ENCODE measurements at regions of chr3 and their contacts with region 1.

Region 1: DNA sequence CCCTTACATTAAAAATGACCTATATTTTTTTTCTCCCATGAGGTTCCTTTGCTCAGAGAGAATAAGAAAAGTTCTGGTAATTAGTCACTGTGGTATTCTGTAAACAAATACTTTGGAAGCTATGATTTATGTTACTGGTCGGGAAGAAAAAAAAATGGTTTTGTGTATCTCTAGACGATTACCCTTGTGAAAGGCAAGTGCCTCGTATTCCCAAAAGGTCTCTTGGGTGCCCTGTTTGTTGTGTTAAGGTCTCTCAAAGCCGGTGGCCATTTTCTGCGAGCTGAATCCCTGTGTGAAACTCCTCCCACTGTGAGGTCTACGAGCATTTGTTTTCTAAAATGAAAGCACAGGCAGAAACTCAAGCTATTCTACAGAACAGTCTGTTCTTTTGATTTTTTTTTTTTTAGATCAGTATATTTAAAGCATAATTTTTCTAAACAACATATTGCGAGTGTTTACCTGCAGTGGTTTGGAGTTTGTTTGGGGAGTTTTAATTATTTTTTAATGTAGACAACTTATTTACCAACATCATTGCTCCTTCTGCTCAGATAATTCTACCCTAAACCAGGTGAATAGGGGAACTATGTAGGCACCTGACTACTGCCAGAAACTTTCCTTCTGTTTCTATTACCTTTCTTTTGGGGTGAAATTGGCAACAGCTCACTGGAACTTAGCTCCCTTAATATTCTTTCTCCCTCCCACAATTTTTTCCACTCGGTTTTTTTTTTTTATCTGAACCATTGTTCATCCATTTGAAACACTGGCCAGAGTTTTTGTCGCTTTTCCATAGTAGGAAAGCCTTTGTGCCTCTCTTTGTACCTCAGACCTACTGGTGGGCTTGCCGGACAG is 44.0 kb downstream of the ZBTB38 start:
- DNase-seq: peak; percentile 73
- H3K4me3 Mint-ChIP-seq: peak overlapping the region; percentile 72
- H3K27ac Mint-ChIP-seq: peak overlapping the region; percentile 97
- H3K4me1 Mint-ChIP-seq: peaks cover 72% of the 10 kb centered on the region
- H3K27me3 Mint-ChIP-seq: no peaks in the 10 kb centered on the region

Region 2: DNA sequence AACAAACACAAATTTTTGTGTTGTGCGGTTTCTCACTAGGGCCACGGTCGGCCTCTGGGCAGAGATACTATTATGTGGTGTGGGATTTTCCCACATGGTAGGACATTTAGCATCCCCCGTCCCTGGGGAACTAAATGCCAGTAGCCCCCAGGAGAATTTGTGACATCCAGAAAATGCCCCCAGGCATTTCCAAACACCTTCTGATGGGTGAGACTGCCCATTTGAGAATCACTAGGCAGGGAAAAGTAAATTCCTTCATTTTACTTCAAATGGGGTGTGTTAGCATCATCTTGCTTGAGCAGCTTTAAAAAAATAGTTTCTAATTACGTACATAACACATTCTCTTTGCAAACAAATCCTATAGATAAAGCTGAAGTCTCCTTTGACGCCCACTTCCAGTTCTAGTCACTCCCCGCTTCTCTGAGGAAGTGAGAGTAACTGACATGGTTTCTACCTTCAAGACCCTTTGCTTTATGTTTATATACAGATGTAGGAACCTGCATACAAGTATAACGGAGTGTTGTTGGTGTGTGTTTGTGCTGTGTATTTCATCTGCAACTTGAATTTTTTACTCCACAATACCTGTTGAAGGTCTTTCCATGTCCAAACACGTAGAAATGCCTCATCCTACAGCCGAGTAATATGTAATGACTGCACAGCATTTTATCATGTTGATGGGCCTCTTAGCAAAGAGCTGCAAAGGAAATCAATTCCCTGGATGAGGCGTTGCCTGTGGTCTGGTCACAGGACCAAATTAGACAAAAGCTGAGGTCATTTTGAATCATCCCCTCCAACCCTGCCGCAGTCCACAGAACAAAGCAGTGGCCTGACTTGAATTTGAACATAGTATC is 75.4 kb before region 1 on chr3:
- CTCF ChIA-PET with region 1: no interaction called
- intact Hi-C with region 1: no loop called
- DNase-seq: no peak
- H3K4me3 Mint-ChIP-seq: no peak overlapping the region
- H3K27ac Mint-ChIP-seq: no peak overlapping the region
- H3K4me1 Mint-ChIP-seq: no peaks in the 10 kb centered on the region
- H3K27me3 Mint-ChIP-seq: no peaks in the 10 kb centered on the region

Region 3: DNA sequence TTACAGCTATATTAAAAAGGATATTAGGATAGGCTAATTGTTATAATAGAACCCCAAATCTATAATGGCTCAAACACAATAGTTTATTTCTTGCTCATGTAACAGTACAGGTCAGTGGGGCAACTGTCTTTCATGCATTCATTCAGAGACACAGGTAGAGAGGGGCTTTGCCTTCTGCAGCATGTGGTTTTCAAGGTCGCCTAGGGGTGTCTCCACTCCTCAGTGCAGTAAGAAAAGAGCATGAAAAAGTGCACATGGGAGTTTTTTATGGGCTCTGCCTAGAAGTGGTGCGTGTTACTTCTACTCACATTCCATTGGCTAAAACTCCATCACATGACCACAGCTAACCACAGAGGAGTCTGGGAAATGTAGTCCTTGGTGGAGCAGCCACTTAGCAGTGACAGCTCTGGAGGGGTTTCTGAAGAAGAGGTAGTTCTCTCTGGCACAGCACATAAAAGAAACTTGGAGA is 42.2 kb before region 1 on chr3:
- CTCF ChIA-PET with region 1: interaction called, 4 read pairs
- intact Hi-C with region 1: loop called (anchors 1 kb)
- DNase-seq: peak; percentile 70
- H3K4me3 Mint-ChIP-seq: no peak overlapping the region
- H3K27ac Mint-ChIP-seq: no peak overlapping the region
- H3K4me1 Mint-ChIP-seq: peaks cover 21% of the 10 kb centered on the region
- H3K27me3 Mint-ChIP-seq: no peaks in the 10 kb centered on the region

Region 4: GRCh38 chr3:141441381-141442364 is 29.4 kb after region 1 on chr3:
- CTCF ChIA-PET with region 1: interaction called, 30 read pairs
- intact Hi-C with region 1: loop called (anchors 1 kb)
- DNase-seq: peak; percentile 91
- H3K4me3 Mint-ChIP-seq: no peak overlapping the region
- H3K27ac Mint-ChIP-seq: peak overlapping the region; percentile 73
- H3K4me1 Mint-ChIP-seq: peaks cover 23% of the 10 kb centered on the region
- H3K27me3 Mint-ChIP-seq: no peaks in the 10 kb centered on the region

Region 5: GRCh38 chr3:141487521-141488252 is 75.4 kb after region 1 on chr3:
- CTCF ChIA-PET with region 1: no interaction called
- intact Hi-C with region 1: loop called (anchors 1 kb)
- DNase-seq: peak; percentile 93
- H3K4me3 Mint-ChIP-seq: peak overlapping the region; percentile 87
- H3K27ac Mint-ChIP-seq: peak overlapping the region; percentile 94
- H3K4me1 Mint-ChIP-seq: peaks cover 68% of the 10 kb centered on the region
- H3K27me3 Mint-ChIP-seq: no peaks in the 10 kb centered on the region

Region 6: GRCh38 chr3:141542989-141543388 is 130.7 kb after region 1 on chr3:
- CTCF ChIA-PET with region 1: no interaction called
- intact Hi-C with region 1: loop called (anchors 2 kb)
- DNase-seq: no peak
- H3K4me3 Mint-ChIP-seq: no peak overlapping the region
- H3K27ac Mint-ChIP-seq: no peak overlapping the region
- H3K4me1 Mint-ChIP-seq: peaks cover 66% of the 10 kb centered on the region
- H3K27me3 Mint-ChIP-seq: no peaks in the 10 kb centered on the region

Region 7: GRCh38 chr3:141796081-141796888 is 384.0 kb after region 1 on chr3:
- CTCF ChIA-PET with region 1: no interaction called
- intact Hi-C with region 1: loop called (anchors 1 kb)
- DNase-seq: peak; percentile 90
- H3K4me3 Mint-ChIP-seq: peak overlapping the region; percentile 74
- H3K27ac Mint-ChIP-seq: peak overlapping the region; percentile 89
- H3K4me1 Mint-ChIP-seq: peaks cover 46% of the 10 kb centered on the region
- H3K27me3 Mint-ChIP-seq: no peaks in the 10 kb centered on the region

Region 8: DNA sequence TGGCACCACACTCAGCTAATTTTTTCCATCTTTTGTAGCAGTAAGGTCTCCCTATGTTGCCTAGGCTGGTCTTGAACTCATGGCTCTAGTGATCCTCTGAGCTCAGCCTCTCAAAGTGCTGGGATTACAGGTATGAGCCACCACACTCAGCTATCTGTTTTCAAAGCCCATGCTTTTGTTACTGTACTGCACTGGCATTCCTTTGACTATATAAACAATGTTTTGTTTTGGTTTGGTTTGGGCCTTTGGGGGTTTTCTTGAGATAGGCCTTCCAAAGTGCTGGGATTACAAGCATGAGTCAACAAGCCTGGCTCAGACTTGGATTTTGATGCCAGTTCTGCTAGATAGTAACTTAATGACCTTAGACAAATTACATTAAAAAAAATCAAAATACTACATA is 902.8 kb after region 1 on chr3:
- CTCF ChIA-PET with region 1: no interaction called
- intact Hi-C with region 1: no loop called
- DNase-seq: no peak
- H3K4me3 Mint-ChIP-seq: no peak overlapping the region
- H3K27ac Mint-ChIP-seq: no peak overlapping the region
- H3K4me1 Mint-ChIP-seq: no peaks in the 10 kb centered on the region
- H3K27me3 Mint-ChIP-seq: no peaks in the 10 kb centered on the region

Measured in activated naive CD4-positive, alpha-beta T cell treated with anti-CD3 and anti-CD28 coated beads for 36 hours (primary cell).